Heart left ventricle (tissue), 16 donors: ENCODE measurements at regions of chr6 and their contacts with region 1.

Region 1: GRCh38 chr6:89080542-89081422 is at the start of gene PNRC1:
- DNase-seq: peak; percentile 100
- ATAC-seq: peak; percentile 88 to 92 (median 92)
- H3K4me3 ChIP-seq: peak within 1 kb of the TSS; percentile 68 to 100 (median 95)
- H3K27ac ChIP-seq: peak within 1 kb of the TSS; percentile 95 to 100 (median 100)
- H3K4me1 ChIP-seq: peaks cover 0 to 48% (median 29%) of the 10 kb centered on the region in 12 donors
- H3K27me3 ChIP-seq: no peaks in the 10 kb centered on the region
- CTCF ChIP-seq: peak in 1 of 12 donors; percentile 8
- POLR2A ChIP-seq: peak; percentile 95 to 100
- total RNA-seq, gene PNRC1: 141 to 280 (median 213) TPM

Region 2: DNA sequence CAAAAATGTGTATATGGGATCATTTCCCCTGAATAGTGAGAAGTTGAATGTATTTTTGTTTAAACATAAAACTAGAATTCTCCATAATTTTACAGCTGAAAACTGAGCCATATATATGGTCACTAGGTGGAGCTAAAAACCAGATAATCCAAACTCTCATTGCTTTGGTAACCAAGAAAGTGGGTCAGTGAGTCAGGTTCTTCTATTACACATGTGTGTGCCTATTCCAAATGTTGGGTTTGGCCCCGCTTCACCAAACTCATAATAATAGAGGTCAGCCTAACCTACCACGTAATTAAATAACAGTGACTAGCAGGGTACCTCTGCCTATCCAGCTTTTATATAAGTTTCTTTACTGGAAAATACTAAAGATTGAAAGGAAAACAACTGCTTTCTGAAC is 98.1 kb before region 1 on chr6:
- intact Hi-C with region 1: loop called in 8 of 10 experiments (anchors 2 to 5 kb)
- DNase-seq: peak in 4 of 5 donors; percentile 36 to 43 (median 42)
- ATAC-seq: peak; percentile 85 to 98 (median 92)
- H3K4me3 ChIP-seq: peak overlapping the region in 2 of 12 donors; percentile 11 to 28
- H3K27ac ChIP-seq: no peak overlapping the region
- H3K4me1 ChIP-seq: peaks cover 0 to 10% (median 7%) of the 10 kb centered on the region in 12 donors
- H3K27me3 ChIP-seq: no peaks in the 10 kb centered on the region
- CTCF ChIP-seq: peak; percentile 58 to 87 (median 76)
- POLR2A ChIP-seq: no peak

Region 3: GRCh38 chr6:89022798-89023197 is 58.0 kb before region 1 on chr6:
- intact Hi-C with region 1: loop called in 2 of 10 experiments (anchors 2 to 5 kb)
- DNase-seq: no peak
- ATAC-seq: peak in 2 of 4 donors; percentile 17 to 38
- H3K4me3 ChIP-seq: no peak overlapping the region
- H3K27ac ChIP-seq: peak overlapping the region in 6 of 12 donors; percentile 13 to 87 (median 60)
- H3K4me1 ChIP-seq: peaks cover 0 to 40% (median 26%) of the 10 kb centered on the region in 12 donors
- H3K27me3 ChIP-seq: no peaks in the 10 kb centered on the region
- CTCF ChIP-seq: no peak
- POLR2A ChIP-seq: no peak

Region 4: DNA sequence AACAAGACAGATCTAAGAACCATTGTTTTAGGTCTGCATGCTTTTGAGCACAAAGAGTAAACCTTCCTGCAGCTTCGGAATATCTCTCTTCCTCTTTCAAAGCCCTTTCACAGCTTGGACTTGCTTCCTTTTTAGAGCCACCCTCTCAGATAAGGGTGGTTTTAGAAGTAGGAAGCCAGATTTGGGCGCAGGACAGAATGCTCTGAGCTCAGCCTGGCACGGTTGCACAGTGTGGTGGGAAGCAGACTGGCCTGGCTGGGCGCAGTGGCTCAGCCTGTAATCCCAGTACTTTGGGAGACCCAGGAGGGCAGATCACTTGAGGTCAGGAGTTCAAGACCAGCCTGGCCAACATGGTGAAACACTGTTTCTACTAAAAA is 35.8 kb before region 1 on chr6:
- intact Hi-C with region 1: loop called in 2 of 10 experiments (anchors 2 to 5 kb)
- DNase-seq: peak; percentile 33 to 68 (median 63)
- ATAC-seq: peak; percentile 89 to 96 (median 90)
- H3K4me3 ChIP-seq: no peak overlapping the region
- H3K27ac ChIP-seq: peak overlapping the region in 6 of 12 donors; percentile 14 to 65 (median 37)
- H3K4me1 ChIP-seq: peaks cover 0 to 51% (median 5%) of the 10 kb centered on the region in 12 donors
- H3K27me3 ChIP-seq: no peaks in the 10 kb centered on the region
- CTCF ChIP-seq: no peak
- POLR2A ChIP-seq: no peak

Region 5: DNA sequence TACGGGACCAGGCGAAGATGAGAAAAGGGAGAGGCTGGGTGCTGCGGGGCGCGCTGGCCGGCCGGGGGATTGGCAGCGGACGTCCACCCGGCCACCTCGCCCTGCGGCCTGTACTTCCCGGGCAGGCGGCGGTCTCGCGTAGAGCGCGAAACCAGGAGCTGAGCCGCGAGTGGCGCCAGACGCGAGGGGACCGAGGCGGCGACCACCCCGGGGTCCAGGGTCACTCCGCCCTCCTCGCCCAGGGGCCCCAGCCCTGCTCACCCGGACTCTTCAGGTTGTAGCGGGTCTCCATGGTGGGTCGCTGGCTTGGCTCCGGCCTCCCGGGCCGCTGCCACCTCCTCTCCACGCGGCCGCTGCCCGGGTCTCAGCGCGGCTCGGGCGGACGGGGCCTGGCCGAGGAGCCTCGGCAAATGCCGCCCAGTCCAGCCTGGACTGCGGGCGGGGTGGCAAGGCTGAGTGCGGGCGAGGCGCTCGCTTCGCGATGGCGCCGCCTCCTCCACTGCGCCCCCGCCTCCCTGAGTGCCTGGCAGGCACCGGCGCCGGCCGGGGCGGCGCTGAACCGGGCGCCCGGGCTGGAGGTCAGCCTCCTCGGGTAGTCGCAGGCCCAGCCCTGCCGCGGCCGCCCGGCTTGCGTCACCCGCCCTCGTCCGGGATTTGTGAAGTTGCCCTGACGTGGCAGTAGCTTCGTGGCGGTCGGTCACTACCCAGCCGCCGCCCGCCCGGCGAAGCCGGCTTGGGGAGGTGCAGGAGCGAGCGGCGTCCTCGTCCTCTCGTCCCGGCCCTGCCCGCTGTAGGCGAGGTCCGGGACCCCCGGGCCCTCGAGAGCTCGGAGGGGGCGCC is 271.7 kb after region 1 on chr6 and contains the start of gene UBE2J1:
- intact Hi-C with region 1: loop called in 4 of 10 experiments (anchors 5 kb)
- DNase-seq: peak; percentile 95 to 98 (median 97)
- ATAC-seq: peak; percentile 90 to 98 (median 96)
- H3K4me3 ChIP-seq: peak within 1 kb of the TSS; percentile 73 to 99 (median 88)
- H3K27ac ChIP-seq: peak within 1 kb of the TSS; percentile 95 to 100 (median 98)
- H3K4me1 ChIP-seq: peaks cover 0 to 57% (median 38%) of the 10 kb centered on the region in 12 donors
- H3K27me3 ChIP-seq: no peaks in the 10 kb centered on the region
- CTCF ChIP-seq: peak in 2 of 12 donors; percentile 7 to 9
- POLR2A ChIP-seq: peak; percentile 84 to 94
- total RNA-seq, gene UBE2J1: 9.8 to 28.2 (median 15.2) TPM

Region 6: DNA sequence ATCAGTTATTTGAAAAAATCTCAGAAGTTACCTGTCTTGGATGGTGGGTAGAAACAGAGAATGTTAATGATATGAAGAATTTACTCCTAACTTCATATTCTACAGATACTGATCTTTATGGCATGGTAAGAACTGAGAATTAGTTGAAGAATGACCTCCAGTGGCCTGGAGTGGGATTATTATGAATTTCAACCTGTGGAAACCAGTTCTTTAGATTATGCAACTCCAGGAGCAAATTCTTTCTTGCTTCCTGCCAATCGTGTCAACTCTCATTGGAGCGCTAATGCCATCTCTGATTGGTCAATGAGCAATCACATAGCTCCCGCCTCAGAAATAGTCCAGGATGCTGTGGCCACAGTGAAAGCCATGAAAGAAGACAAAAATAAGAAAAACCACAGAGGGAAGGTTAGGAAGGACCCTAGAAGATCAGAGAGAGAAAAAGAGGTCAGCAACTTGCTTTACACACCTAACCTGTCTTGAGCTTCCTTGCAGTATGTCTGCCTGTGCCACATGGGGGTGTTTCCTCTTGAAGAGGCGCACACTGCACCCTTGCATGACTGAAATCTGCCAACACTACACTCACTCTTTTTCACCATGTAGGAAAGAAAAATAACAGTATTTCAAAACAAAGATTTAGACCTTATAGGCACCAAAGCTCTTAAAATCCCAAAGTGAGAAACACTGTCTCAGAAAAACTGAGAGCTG is 517.4 kb after region 1 on chr6:
- intact Hi-C with region 1: no loop called
- DNase-seq: no peak
- ATAC-seq: peak in 2 of 4 donors; percentile 29 to 38
- H3K4me3 ChIP-seq: no peak overlapping the region
- H3K27ac ChIP-seq: no peak overlapping the region
- H3K4me1 ChIP-seq: peaks cover 0 to 16% (median 5%) of the 10 kb centered on the region in 12 donors
- H3K27me3 ChIP-seq: no peaks in the 10 kb centered on the region
- CTCF ChIP-seq: peak in 7 of 12 donors; percentile 14 to 42 (median 31)
- POLR2A ChIP-seq: no peak